ENCODE measurements at regions of chr7 and their contacts with region 1.

Region 1: DNA sequence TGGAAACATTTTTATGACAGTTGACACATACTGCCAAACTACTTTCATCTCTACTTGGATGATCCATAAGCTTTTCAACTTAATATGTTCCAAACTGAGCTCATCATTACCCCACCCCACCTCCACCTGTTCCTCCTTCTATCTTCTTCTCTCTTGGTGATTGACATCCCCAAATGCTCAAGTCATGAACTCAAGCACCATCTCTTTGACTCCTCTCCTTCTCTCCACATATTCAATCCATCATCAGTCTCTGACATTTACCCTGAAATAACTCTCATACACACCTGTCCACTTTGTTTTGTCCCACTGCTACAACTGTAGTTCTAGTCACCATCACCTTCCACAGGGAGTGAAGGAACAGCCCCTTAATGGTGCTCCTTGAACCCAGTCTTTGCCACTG is 43.3 kb downstream of the SGCE start:
- DNase-seq: no peak
- ATAC-seq: no peak
- H3K4me3 ChIP-seq: no peak overlapping the region
- H3K27ac ChIP-seq: no peak overlapping the region
- H3K4me1 ChIP-seq: no peaks in the 10 kb centered on the region
- H3K27me3 ChIP-seq: no peaks in the 10 kb centered on the region
- CTCF ChIP-seq: no peak
- POLR2A ChIP-seq: no peak
- RAD21 ChIP-seq: no peak

Region 2: GRCh38 chr7:94529516-94529915 is 83.1 kb before region 1 on chr7:
- CTCF ChIA-PET with region 1: no interaction called
- POLR2A ChIA-PET with region 1: no interaction called
- dilution Hi-C with region 1: no loop called
- in situ Hi-C with region 1: no loop called
- intact Hi-C with region 1: loop called (anchors 5 kb)
- DNase-seq: peak; percentile 43
- ATAC-seq: peak; percentile 70
- H3K4me3 ChIP-seq: no peak overlapping the region
- H3K27ac ChIP-seq: no peak overlapping the region
- H3K4me1 ChIP-seq: no peaks in the 10 kb centered on the region
- H3K27me3 ChIP-seq: no peaks in the 10 kb centered on the region
- CTCF ChIP-seq: no peak
- POLR2A ChIP-seq: no peak
- RAD21 ChIP-seq: no peak